ENCODE measurements at regions of chr7 and their contacts with region 1.

Region 1: DNA sequence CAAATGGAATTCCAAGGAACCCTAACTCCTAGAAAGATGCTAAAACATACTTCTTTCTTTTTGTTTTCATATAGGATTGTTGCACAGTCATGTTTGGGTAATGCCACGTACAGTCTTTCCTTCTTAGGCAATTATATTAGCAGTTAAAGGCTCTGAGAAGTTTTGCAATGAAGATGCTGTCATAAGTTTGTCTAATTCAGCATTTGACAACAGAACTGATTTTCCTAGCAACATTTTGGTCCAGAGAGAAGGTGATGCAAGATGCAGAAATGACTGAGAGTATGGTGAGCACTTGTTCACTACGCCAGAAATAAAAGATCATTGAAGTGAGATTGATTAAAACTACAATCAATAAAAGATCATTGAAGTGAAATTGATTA is 184.0 kb upstream of the PLXNA4 start:
- DNase-seq: no peak
- ATAC-seq: no peak
- H3K4me3 Mint-ChIP-seq: no peak overlapping the region
- H3K27ac Mint-ChIP-seq: no peak overlapping the region
- H3K4me1 Mint-ChIP-seq: no peaks in the 10 kb centered on the region
- H3K27me3 Mint-ChIP-seq: 0 out of 2 replicates have a peak, but pooled peaks cover 3% of the 10 kb centered on the region
- CTCF ChIP-seq: no peak

Region 2: GRCh38 chr7:132709971-132710567 is 50.2 kb before region 1 on chr7:
- CTCF ChIA-PET with region 1: no interaction called
- POLR2A ChIA-PET with region 1: interaction called, 16 read pairs
- DNase-seq: peak; percentile 22
- ATAC-seq: peak; percentile 32; the same call in 1 of the 2 replicates
- H3K4me3 Mint-ChIP-seq: no peak overlapping the region
- H3K27ac Mint-ChIP-seq: no peak overlapping the region
- H3K4me1 Mint-ChIP-seq: peaks cover 2% of the 10 kb centered on the region; the same call in 1 of the 2 replicates
- H3K27me3 Mint-ChIP-seq: no peaks in the 10 kb centered on the region; the same call in 1 of the 2 replicates
- CTCF ChIP-seq: peak; percentile 19; the same call in 1 of the 2 replicates

Region 3: GRCh38 chr7:132789281-132789680 is 29.0 kb after region 1 on chr7:
- CTCF ChIA-PET with region 1: no interaction called
- POLR2A ChIA-PET with region 1: no interaction called
- DNase-seq: no peak
- ATAC-seq: peak; percentile 26; the same call in 1 of the 2 replicates
- H3K4me3 Mint-ChIP-seq: no peak overlapping the region
- H3K27ac Mint-ChIP-seq: peak overlapping the region; percentile 82; the same call in 1 of the 2 replicates
- H3K4me1 Mint-ChIP-seq: peaks cover 7% of the 10 kb centered on the region; the same call in 1 of the 2 replicates
- H3K27me3 Mint-ChIP-seq: no peaks in the 10 kb centered on the region
- CTCF ChIP-seq: no peak